CD4-positive, alpha-beta T cell (primary cell): ENCODE measurements at regions of chr2 and their contacts with region 1.

Region 1: GRCh38 chr2:64214281-64215115 is 70.3 kb upstream of the PELI1 start:
- DNase-seq: peak in 10 of 14 experiments; percentile 17 to 80 (median 42)
- ATAC-seq: peak; percentile 84
- H3K4me3 ChIP-seq: peak overlapping the region; percentile 4
- H3K4me3 Mint-ChIP-seq: peak overlapping the region; percentile 73
- H3K27ac ChIP-seq: peak overlapping the region; percentile 51 to 57
- H3K27ac Mint-ChIP-seq: peak overlapping the region; percentile 86
- H3K4me1 ChIP-seq: peaks cover 25% of the 10 kb centered on the region
- H3K4me1 Mint-ChIP-seq: peaks cover 64% of the 10 kb centered on the region
- H3K27me3 ChIP-seq: no peaks in the 10 kb centered on the region
- H3K27me3 Mint-ChIP-seq: no peaks in the 10 kb centered on the region
- CTCF ChIP-seq: no peak

Region 2: DNA sequence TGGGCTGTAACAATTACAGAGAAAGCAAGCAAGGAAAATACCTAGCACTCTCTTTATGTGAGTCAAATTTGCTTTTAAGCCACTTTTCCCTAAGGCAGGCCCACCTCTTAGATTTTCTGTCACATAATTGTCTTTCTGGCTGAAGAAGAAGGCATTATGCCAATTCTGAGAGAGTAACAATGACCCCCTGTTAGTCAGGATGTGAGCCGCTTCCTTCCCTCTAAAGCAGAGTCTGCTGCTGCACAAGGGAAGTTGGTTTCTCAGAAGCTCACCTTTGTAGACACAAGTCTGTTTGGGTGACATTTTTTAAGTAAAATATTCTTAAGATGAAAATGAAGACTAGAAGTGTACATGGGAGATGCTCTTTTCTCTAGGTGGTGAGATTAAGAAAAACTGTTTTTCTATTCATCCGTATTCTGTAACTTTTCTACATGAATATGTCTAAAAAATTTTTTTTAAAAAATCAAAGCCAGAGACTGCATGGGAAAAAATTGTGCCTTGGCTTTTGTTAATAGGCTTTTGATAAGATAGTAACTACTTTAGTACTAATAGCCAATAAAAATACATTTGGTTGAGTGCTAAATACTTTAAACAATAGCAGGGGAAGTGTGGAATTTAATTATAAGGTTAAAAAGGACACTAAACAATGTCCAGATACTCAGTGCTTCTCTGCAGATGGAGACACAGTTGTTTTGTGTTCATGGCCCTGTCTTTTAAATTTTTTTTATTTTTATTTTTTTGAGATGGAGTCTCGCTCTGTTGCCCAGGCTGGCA is 161.8 kb before region 1 on chr2:
- CTCF ChIA-PET with region 1: interaction called, 12 read pairs
- POLR2A ChIA-PET with region 1: no interaction called
- intact Hi-C with region 1: loop called in 1 of 2 experiments (anchors 10 kb)
- DNase-seq: peak in 5 of 14 experiments; percentile 27 to 56 (median 35)
- ATAC-seq: peak; percentile 53
- H3K4me3 ChIP-seq: no peak overlapping the region
- H3K4me3 Mint-ChIP-seq: peak overlapping the region; percentile 13
- H3K27ac ChIP-seq: no peak overlapping the region
- H3K27ac Mint-ChIP-seq: peak overlapping the region; percentile 55
- H3K4me1 ChIP-seq: peaks cover 15% of the 10 kb centered on the region
- H3K4me1 Mint-ChIP-seq: peaks cover 51% of the 10 kb centered on the region
- H3K27me3 ChIP-seq: no peaks in the 10 kb centered on the region
- H3K27me3 Mint-ChIP-seq: no peaks in the 10 kb centered on the region
- CTCF ChIP-seq: no peak

Region 3: DNA sequence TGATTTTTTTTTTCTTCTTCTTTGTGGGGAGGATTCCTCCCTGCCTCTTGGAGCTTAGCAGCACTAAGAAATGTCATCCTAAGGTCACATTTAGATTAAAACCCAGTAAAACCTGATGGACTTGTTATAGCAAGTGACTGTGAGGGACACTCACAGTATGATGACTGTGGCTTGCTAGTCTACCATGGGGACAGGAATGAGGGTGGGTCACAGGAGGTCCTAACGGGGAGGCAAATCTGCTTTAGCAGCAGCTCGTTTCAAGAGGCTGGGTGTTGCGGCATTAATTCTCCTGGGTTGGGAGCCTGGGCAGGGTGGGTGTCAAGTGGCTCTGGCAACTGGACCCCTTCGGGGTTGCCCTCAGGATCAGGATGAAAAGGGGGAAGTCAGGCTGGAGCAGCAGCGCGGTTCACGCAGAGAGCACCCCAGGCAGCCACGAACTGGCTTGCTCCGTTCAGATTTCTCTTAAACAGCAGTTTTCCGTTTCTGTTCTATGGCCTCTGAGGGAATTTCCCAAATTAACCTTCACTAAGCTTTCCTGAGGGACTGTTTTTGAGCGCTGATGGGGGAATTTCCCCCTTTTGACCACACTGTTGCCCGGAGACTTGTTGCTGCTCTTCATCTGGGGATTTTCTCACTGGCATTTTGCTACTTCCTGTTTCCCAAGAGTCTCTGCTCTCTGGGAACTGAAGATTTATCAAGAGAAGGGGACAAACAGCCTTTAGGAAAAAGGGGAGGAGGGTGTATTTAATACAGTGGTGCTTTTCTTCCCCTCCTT is 10.5 kb before region 1 on chr2:
- CTCF ChIA-PET with region 1: interaction called, 5 read pairs
- POLR2A ChIA-PET with region 1: interaction called, 16 read pairs
- intact Hi-C with region 1: loop called in 1 of 2 experiments (anchors 1 kb)
- DNase-seq: peak in 9 of 14 experiments; percentile 10 to 94 (median 18)
- ATAC-seq: peak; percentile 30
- H3K4me3 ChIP-seq: peak overlapping the region; percentile 42
- H3K4me3 Mint-ChIP-seq: peak overlapping the region; percentile 80
- H3K27ac ChIP-seq: peak overlapping the region; percentile 72 to 88
- H3K27ac Mint-ChIP-seq: peak overlapping the region; percentile 92
- H3K4me1 ChIP-seq: peaks cover 48% of the 10 kb centered on the region
- H3K4me1 Mint-ChIP-seq: peaks cover 90% of the 10 kb centered on the region
- H3K27me3 ChIP-seq: no peaks in the 10 kb centered on the region
- H3K27me3 Mint-ChIP-seq: no peaks in the 10 kb centered on the region
- CTCF ChIP-seq: no peak

Region 4: DNA sequence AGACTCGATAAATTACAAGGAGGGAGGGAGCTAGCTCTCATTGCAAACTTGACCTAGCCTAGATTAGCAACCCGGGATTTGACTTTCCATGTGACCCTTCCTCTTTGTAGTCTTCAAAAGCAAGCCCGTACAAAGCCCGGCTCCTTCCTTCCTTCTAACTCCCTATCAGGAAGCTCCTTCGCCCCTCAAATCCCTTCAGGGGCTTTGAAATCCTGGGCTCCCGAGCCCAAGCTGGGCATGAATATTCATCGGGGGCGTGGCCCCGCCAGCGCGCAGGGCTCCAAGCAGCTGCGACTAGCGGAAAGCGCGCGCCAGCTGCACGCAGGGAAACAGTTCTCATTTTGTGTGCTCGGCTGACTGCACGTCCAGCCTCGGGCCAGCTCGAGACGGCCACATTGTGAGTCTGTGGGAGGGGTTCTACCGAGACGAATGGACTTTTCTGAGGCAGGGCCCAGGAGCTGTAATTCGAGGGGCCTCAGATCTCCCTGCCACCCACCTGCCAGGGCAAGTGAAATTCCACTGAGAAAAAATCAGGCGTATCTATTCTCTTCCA is 13.7 kb after region 1 on chr2:
- CTCF ChIA-PET with region 1: interaction called, 6 read pairs
- POLR2A ChIA-PET with region 1: interaction called, 23 read pairs
- intact Hi-C with region 1: no loop called
- DNase-seq: peak; percentile 34 to 79 (median 54)
- ATAC-seq: peak; percentile 94
- H3K4me3 ChIP-seq: peak overlapping the region; percentile 64
- H3K4me3 Mint-ChIP-seq: peak overlapping the region; percentile 91
- H3K27ac ChIP-seq: peak overlapping the region in 1 of 2 donors; percentile 30
- H3K27ac Mint-ChIP-seq: peak overlapping the region; percentile 80
- H3K4me1 ChIP-seq: peaks cover 22% of the 10 kb centered on the region
- H3K4me1 Mint-ChIP-seq: peaks cover 19% of the 10 kb centered on the region
- H3K27me3 ChIP-seq: no peaks in the 10 kb centered on the region
- H3K27me3 Mint-ChIP-seq: no peaks in the 10 kb centered on the region
- CTCF ChIP-seq: no peak